A673 (cell line): ENCODE measurements at regions of chr14 and their contacts with region 1.

Region 1: DNA sequence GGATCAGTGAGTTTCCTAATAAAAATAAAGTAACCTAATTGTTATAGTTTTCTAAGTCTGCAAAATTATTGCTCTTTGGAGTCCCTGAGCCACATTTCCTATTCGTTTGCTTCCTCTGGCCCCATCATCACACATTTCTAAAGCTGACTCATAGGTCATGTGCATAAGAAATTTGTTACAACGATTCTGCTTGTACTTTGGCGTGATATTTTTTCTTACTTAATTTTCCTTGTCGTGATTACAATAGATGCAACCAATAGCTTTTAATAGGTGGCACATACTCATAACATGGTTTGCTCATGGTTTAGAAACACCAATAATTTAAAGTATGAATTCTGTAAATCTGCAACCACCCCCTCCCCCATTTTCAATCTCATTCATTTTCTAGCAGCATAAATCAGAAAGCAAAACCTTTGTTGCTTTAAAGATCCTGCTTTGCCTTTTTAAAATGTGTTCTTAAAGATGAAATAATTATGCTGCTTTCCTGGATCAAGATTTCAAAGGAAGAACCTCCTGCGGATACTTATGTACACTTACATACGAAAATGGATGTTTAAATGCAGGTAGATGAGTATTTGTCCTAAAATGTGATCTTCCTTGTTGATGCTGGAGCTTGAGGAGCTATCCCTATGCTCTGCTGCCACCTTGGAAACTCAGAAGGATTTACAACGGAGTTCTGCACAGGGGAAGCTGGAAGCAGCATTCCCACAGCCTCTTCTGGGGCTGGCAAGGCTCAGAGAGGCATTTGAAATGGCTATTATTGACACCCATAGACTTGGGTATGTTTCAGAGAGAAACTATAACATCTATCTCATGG is 1.7 kb upstream of the FLRT2 start:
- DNase-seq: peak; percentile 90
- H3K4me3 ChIP-seq: peak overlapping the region; percentile 77
- H3K27ac ChIP-seq: peak overlapping the region; percentile 90
- H3K4me1 ChIP-seq: peaks cover 19% of the 10 kb centered on the region
- H3K27me3 ChIP-seq: no peaks in the 10 kb centered on the region
- CTCF ChIP-seq: peak; percentile 81

Region 2: DNA sequence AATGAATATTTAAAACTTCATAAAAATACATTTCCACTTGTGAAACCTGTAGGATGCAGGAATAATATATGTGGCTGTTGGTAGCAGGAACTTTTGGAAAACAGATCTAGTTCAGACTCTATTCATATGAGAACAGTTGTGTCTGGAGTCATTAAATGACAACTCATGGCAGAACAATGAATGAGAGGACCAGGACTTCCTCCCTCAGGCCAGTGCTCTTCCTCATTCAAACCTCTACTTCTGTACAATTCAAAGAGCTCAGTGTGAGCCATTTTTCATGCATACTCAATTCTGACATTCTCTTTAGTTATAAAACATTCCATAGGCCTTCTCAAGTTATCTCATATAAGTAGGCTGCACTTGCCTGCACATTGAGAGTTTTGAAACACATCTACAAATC is 1525.0 kb before region 1 on chr14:
- CTCF ChIA-PET with region 1: no interaction called
- POLR2A ChIA-PET with region 1: no interaction called
- intact Hi-C with region 1: loop called (anchors 5 kb)
- DNase-seq: peak; percentile 30
- H3K4me3 ChIP-seq: no peak overlapping the region
- H3K27ac ChIP-seq: no peak overlapping the region
- H3K4me1 ChIP-seq: peaks cover 20% of the 10 kb centered on the region
- H3K27me3 ChIP-seq: no peaks in the 10 kb centered on the region
- CTCF ChIP-seq: no peak

Region 3: DNA sequence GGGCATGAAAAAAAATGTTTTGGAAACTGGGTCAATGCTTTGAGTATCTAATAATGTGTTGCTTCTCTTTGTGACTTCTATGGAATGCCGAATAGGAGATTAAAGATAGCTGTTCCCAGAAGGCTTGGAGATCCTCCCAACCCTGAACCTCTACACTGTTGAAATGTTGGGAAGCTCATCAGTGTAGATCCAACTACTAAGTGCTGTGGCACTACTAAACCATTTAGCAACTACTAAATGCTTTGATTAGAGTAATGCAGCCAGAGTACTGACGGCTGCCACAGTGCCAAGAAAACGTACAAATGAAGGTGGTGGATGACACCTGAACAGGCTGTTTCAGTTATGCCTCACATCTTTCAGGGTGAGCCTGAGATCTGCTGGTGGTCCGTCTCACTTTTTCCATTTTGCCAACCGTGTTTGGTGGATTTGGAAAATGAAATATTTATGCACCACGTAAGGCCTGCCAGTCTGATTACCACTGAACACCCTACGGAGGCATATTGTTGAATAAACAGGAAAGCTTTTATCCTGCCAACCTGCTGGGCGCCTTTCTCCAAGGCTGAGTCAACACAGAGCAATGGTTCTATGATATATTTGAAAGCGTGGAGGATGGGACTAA is 936.4 kb before region 1 on chr14:
- CTCF ChIA-PET with region 1: no interaction called
- POLR2A ChIA-PET with region 1: no interaction called
- intact Hi-C with region 1: loop called (anchors 5 kb)
- DNase-seq: peak; percentile 96
- H3K4me3 ChIP-seq: no peak overlapping the region
- H3K27ac ChIP-seq: peak overlapping the region; percentile 69
- H3K4me1 ChIP-seq: peaks cover 36% of the 10 kb centered on the region
- H3K27me3 ChIP-seq: no peaks in the 10 kb centered on the region
- CTCF ChIP-seq: no peak

Region 4: DNA sequence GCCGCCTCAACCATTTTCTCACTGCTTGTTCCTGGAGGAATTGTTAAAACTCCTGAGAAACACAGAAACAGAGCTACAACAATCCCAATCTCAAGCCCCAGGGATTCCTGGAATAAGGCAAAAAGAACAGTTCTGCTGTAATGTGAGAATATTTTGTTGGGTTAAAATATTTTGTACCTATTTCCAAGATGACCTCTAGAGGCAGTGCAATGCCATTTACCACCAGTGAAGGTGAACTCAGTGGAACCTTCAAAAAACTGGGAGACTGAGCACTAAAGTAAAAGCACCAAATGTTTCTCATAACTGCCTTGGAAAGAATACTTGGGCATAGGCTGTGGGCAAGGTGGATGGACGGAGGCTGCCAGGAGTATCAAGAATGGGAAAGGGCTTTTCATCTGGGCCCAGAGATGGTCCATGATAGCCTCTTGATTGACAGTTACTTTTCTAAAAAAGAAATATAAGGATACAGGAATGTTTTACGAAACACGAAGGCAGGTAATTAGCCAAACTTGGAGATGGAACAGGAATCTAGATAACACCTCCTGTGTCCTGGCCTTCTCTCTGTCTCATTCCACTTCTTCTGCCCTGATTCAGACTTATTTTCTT is 332.3 kb before region 1 on chr14:
- CTCF ChIA-PET with region 1: no interaction called
- POLR2A ChIA-PET with region 1: no interaction called
- intact Hi-C with region 1: loop called (anchors 1 kb)
- DNase-seq: peak; percentile 28
- H3K4me3 ChIP-seq: no peak overlapping the region
- H3K27ac ChIP-seq: no peak overlapping the region
- H3K4me1 ChIP-seq: peaks cover 11% of the 10 kb centered on the region
- H3K27me3 ChIP-seq: no peaks in the 10 kb centered on the region
- CTCF ChIP-seq: peak; percentile 69

Region 5: GRCh38 chr14:85508863-85509262 is 19.4 kb before region 1 on chr14:
- CTCF ChIA-PET with region 1: no interaction called
- POLR2A ChIA-PET with region 1: no interaction called
- intact Hi-C with region 1: loop called (anchors 1 kb)
- DNase-seq: no peak
- H3K4me3 ChIP-seq: no peak overlapping the region
- H3K27ac ChIP-seq: no peak overlapping the region
- H3K4me1 ChIP-seq: no peaks in the 10 kb centered on the region
- H3K27me3 ChIP-seq: no peaks in the 10 kb centered on the region
- CTCF ChIP-seq: no peak